ENCODE measurements at regions of chr19 and their contacts with region 1.

Region 1: DNA sequence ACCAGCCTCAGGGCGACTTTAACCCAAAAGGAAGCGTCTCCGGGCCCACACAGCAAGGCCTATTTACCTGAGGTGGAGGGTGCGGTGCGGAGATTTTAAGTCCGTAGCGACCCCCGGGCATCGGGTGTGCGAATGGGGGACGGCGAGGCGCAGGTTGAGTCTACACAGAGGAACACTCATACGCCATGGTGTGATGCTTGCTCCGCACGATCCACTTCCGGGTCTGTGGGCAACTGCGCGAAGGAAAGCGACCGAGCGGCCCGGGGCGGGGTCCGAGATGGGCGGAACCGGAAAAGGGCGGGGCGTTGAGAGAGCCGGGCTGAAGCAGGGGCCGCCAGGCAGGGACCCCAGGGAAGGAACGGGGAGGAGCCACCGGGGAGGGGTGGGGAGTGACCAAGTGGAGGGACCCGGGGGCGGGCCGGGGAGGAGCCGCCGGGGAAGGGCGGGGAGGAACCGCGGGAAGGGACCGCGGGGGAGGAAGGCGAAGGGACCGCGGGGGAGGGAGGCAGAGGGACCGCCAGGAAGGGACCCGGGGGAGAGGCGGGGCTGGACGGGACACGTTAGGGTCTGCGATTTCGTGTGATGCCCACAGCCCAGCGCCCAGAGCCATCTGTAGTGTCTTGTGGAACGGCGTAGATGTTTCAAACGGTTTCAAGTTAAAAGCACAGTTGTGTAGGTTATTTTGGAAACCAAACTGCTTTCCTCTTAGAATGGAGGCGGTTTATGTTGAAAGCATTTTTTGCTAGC is at the start of gene ZNF160:
- DNase-seq: peak; percentile 99 to 100 (median 100)
- ATAC-seq: peak; percentile 98 to 99 (median 99)
- H3K4me3 ChIP-seq: peak within 1 kb of the TSS; percentile 67 to 99 (median 89)
- H3K27ac ChIP-seq: peak within 1 kb of the TSS; percentile 83 to 97 (median 92)
- H3K4me1 ChIP-seq: peaks cover 6 to 45% (median 24%) of the 10 kb centered on the region in 12 donors
- H3K27me3 ChIP-seq: no peaks in the 10 kb centered on the region
- CTCF ChIP-seq: no peak
- POLR2A ChIP-seq: peak; percentile 43 to 83
- total RNA-seq, gene ZNF160: 10.0 to 24.7 (median 17.0) TPM

Region 2: GRCh38 chr19:52993323-52994178 is 109.8 kb before region 1 on chr19:
- intact Hi-C with region 1: loop called in 1 of 10 experiments (anchors 10 kb)
- DNase-seq: peak; percentile 76 to 88 (median 82)
- ATAC-seq: peak; percentile 81 to 96 (median 92)
- H3K4me3 ChIP-seq: peak overlapping the region; percentile 44 to 79 (median 61)
- H3K27ac ChIP-seq: peak overlapping the region in 11 of 12 donors; percentile 10 to 80 (median 62)
- H3K4me1 ChIP-seq: peaks cover 0 to 21% (median 7%) of the 10 kb centered on the region in 12 donors
- H3K27me3 ChIP-seq: peaks cover 0 to 4% (median 0%) of the 10 kb centered on the region in 9 donors
- CTCF ChIP-seq: peak; percentile 53 to 83 (median 76)
- POLR2A ChIP-seq: no peak

Region 3: GRCh38 chr19:53086949-53087348 is 16.4 kb before region 1 on chr19:
- intact Hi-C with region 1: no loop called
- DNase-seq: peak; percentile 67 to 86 (median 78)
- ATAC-seq: peak; percentile 84 to 97 (median 90)
- H3K4me3 ChIP-seq: no peak overlapping the region
- H3K27ac ChIP-seq: peak overlapping the region; percentile 65 to 94 (median 77)
- H3K4me1 ChIP-seq: peaks cover 0 to 34% (median 5%) of the 10 kb centered on the region in 12 donors
- H3K27me3 ChIP-seq: no peaks in the 10 kb centered on the region
- CTCF ChIP-seq: no peak
- POLR2A ChIP-seq: no peak

Region 4: DNA sequence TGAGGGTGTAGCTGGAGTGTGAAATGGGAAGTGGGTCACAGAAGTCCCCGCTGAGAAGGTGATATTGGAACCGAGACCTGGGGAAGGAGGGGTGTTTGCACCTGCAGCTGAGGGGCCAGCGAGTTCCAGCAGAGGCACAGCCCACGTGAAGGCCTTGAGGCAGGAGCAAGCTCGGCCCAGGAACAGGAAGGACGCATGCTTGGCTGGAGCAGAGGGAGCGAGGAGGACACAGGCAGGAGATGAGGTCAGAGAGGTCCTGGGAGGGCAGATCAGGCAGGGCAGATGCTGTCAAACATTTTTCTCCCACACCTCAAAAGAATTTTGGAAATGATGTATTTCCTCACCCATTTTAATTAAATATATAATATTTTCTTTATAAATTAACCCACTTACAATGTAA is 20.0 kb after region 1 on chr19:
- intact Hi-C with region 1: loop called in 7 of 10 experiments (anchors 1 to 2 kb)
- DNase-seq: no peak
- ATAC-seq: peak in 1 of 4 donors; percentile 82
- H3K4me3 ChIP-seq: no peak overlapping the region
- H3K27ac ChIP-seq: no peak overlapping the region
- H3K4me1 ChIP-seq: peaks cover 0 to 6% (median 0%) of the 10 kb centered on the region in 12 donors
- H3K27me3 ChIP-seq: no peaks in the 10 kb centered on the region
- CTCF ChIP-seq: no peak
- POLR2A ChIP-seq: no peak

Region 5: DNA sequence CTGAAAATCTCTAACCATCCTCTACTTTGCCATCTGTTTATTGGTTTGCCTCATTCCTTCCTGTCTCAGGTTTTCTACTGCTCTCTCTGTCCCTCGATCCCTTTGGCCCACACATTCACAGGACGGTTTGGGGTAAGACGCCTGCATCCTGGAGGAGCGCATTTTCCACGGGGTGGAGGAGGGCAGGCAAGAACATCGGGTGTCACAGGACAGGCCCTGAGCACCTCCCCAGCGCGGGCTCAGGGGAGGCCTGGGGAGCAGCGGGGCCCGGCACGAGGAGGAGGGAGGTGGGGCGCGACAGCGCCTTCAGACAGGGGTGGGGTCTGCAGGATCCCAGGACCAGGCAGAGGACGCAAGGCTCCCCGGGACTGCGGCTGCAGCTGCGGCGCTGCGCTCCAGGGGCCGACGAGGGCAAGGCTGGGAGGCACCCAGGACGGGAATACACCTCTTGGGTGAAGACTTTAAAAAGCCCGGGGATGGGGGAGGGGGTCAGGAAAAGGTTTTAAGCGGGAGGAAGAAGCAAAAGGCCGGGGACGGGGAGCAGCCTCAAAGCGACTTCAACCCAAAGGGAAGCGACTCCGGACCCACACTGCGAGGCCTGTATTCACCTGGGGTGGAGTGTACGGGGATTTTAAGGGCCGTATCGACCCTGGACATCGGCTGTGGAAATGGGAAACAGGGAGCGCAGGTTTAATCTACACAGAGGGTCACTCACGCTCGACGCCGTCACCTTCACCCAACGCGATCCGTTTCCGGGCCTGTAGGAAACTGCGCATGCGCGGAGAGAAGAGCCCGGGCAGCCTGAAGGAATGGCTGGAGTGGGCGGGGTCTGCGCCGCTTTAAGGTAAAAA is 29.0 kb after region 1 on chr19 and contains the start of gene ZNF415:
- intact Hi-C with region 1: loop called in 7 of 10 experiments (anchors 1 to 2 kb)
- DNase-seq: peak; percentile 89 to 94 (median 91)
- ATAC-seq: peak; percentile 91 to 96 (median 94)
- H3K4me3 ChIP-seq: peak within 1 kb of the TSS; percentile 50 to 86 (median 70)
- H3K27ac ChIP-seq: peak within 1 kb of the TSS; percentile 66 to 92 (median 86)
- H3K4me1 ChIP-seq: peaks cover 0 to 34% (median 17%) of the 10 kb centered on the region in 12 donors
- H3K27me3 ChIP-seq: no peaks in the 10 kb centered on the region
- CTCF ChIP-seq: no peak
- POLR2A ChIP-seq: peak in 1 of 2 donors; percentile 31
- total RNA-seq, gene ZNF415: 12.8 to 38.6 (median 21.4) TPM

Region 6: GRCh38 chr19:53172892-53173291 is 69.5 kb after region 1 on chr19:
- intact Hi-C with region 1: no loop called
- DNase-seq: no peak
- ATAC-seq: no peak
- H3K4me3 ChIP-seq: no peak overlapping the region
- H3K27ac ChIP-seq: no peak overlapping the region
- H3K4me1 ChIP-seq: no peaks in the 10 kb centered on the region
- H3K27me3 ChIP-seq: no peaks in the 10 kb centered on the region
- CTCF ChIP-seq: no peak
- POLR2A ChIP-seq: no peak